ENCODE measurements at regions of chr6 and their contacts with region 1.

Region 1: GRCh38 chr6:2931970-2932748 is 29.1 kb upstream of the SERPINB9 start:
- DNase-seq: peak; percentile 84

Region 2: GRCh38 chr6:2846873-2847224 is 85.3 kb before region 1 on chr6:
- CTCF ChIA-PET with region 1: interaction called, 25 read pairs
- POLR2A ChIA-PET with region 1: interaction called, 6 read pairs
- DNase-seq: no peak

Region 3: DNA sequence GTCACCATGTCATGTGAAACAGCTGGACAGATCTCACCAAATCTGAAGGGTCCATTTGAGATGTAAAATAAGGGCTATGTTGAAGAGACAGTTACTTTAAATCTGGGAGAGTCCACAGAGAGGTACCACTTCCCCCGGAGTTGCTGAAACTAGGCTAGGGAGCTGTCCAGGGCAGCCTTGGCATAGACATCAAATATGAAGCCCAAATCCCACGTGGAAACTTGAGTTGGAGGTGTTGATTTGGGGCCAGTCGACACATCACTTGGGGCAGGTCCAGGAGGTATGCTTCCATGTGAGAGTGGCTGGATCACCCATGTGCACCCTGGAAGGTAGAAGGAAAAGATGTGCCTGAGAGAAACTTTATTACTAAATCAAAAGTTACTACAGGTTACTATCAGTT is 17.0 kb before region 1 on chr6:
- CTCF ChIA-PET with region 1: no interaction called
- POLR2A ChIA-PET with region 1: no interaction called
- DNase-seq: no peak